Prostate gland (tissue), 2 donors: ENCODE measurements at regions of chr10 and their contacts with region 1.

Region 1: GRCh38 chr10:89278034-89278535 is 23.8 kb upstream of the IFIT2 start:
- DNase-seq: peak; percentile 62
- H3K4me3 ChIP-seq: no peak overlapping the region
- H3K27ac ChIP-seq: peak overlapping the region; percentile 50 to 56
- H3K4me1 ChIP-seq: no peaks in the 10 kb centered on the region
- H3K27me3 ChIP-seq: no peaks in the 10 kb centered on the region
- CTCF ChIP-seq: no peak
- POLR2A ChIP-seq: no peak

Region 2: GRCh38 chr10:89262086-89263051 is 15.7 kb before region 1 on chr10:
- intact Hi-C with region 1: loop called (anchors 2 kb)
- DNase-seq: peak; percentile 41
- H3K4me3 ChIP-seq: no peak overlapping the region
- H3K27ac ChIP-seq: peak overlapping the region in 1 of 2 donors; percentile 15
- H3K4me1 ChIP-seq: peaks cover 10% of the 10 kb centered on the region
- H3K27me3 ChIP-seq: no peaks in the 10 kb centered on the region
- CTCF ChIP-seq: no peak
- POLR2A ChIP-seq: no peak

Region 3: GRCh38 chr10:89327784-89328441 is 49.8 kb after region 1 on chr10 and contains the start of gene IFIT3:
- intact Hi-C with region 1: no loop called
- DNase-seq: peak; percentile 37
- H3K4me3 ChIP-seq: peak within 1 kb of the TSS; percentile 20 to 34
- H3K27ac ChIP-seq: peak within 1 kb of the TSS; percentile 68 to 70
- H3K4me1 ChIP-seq: no peaks in the 10 kb centered on the region
- H3K27me3 ChIP-seq: no peaks in the 10 kb centered on the region
- CTCF ChIP-seq: no peak
- POLR2A ChIP-seq: no peak
- total RNA-seq, gene IFIT3: 6.4 to 9.5 TPM

Region 4: GRCh38 chr10:89414146-89414878 is 136.2 kb after region 1 on chr10 and contains the start of gene IFIT5:
- intact Hi-C with region 1: no loop called
- DNase-seq: peak; percentile 64
- H3K4me3 ChIP-seq: peak within 1 kb of the TSS; percentile 66 to 85
- H3K27ac ChIP-seq: peak within 1 kb of the TSS; percentile 94 to 95
- H3K4me1 ChIP-seq: peaks cover 4% of the 10 kb centered on the region
- H3K27me3 ChIP-seq: no peaks in the 10 kb centered on the region
- CTCF ChIP-seq: no peak
- POLR2A ChIP-seq: peak; percentile 55
- total RNA-seq, gene IFIT5: 11.5 TPM